ENCODE measurements at regions of chr19 and their contacts with region 1.

Region 1: GRCh38 chr19:35140962-35141637 is 2.0 kb upstream of the FXYD7 start:
- DNase-seq: peak; percentile 91 to 96 (median 94)
- ATAC-seq: peak; percentile 88
- H3K4me3 ChIP-seq: peak overlapping the region; percentile 16 to 43
- H3K4me3 Mint-ChIP-seq: peak overlapping the region; percentile 82
- H3K27ac ChIP-seq: no peak overlapping the region
- H3K27ac Mint-ChIP-seq: peak overlapping the region; percentile 85
- H3K4me1 ChIP-seq: peaks cover 43% of the 10 kb centered on the region
- H3K4me1 Mint-ChIP-seq: peaks cover 40% of the 10 kb centered on the region
- H3K27me3 ChIP-seq: peaks cover 0 to 2% of the 10 kb centered on the region in 2 experiments
- H3K27me3 Mint-ChIP-seq: no peaks in the 10 kb centered on the region
- CTCF ChIP-seq: peak; percentile 32

Region 2: GRCh38 chr19:35030257-35031071 is 110.6 kb before region 1 on chr19 and contains the start of gene SCN1B:
- CTCF ChIA-PET with region 1: no interaction called
- POLR2A ChIA-PET with region 1: no interaction called
- intact Hi-C with region 1: no loop called
- DNase-seq: peak in 8 of 9 experiments; percentile 38 to 77 (median 61)
- ATAC-seq: peak; percentile 79
- H3K4me3 ChIP-seq: peak within 1 kb of the TSS; percentile 18 to 50
- H3K4me3 Mint-ChIP-seq: peak within 1 kb of the TSS; percentile 76
- H3K27ac ChIP-seq: no peak within 1 kb of the TSS
- H3K27ac Mint-ChIP-seq: peak within 1 kb of the TSS; percentile 34
- H3K4me1 ChIP-seq: peaks cover 10% of the 10 kb centered on the region
- H3K4me1 Mint-ChIP-seq: peaks cover 15% of the 10 kb centered on the region
- H3K27me3 ChIP-seq: peaks cover 3 to 14% of the 10 kb centered on the region in 2 experiments
- H3K27me3 Mint-ChIP-seq: peaks cover 7% of the 10 kb centered on the region
- CTCF ChIP-seq: no peak
- total RNA-seq, gene SCN1B: 1.9 to 2.3 TPM

Region 3: DNA sequence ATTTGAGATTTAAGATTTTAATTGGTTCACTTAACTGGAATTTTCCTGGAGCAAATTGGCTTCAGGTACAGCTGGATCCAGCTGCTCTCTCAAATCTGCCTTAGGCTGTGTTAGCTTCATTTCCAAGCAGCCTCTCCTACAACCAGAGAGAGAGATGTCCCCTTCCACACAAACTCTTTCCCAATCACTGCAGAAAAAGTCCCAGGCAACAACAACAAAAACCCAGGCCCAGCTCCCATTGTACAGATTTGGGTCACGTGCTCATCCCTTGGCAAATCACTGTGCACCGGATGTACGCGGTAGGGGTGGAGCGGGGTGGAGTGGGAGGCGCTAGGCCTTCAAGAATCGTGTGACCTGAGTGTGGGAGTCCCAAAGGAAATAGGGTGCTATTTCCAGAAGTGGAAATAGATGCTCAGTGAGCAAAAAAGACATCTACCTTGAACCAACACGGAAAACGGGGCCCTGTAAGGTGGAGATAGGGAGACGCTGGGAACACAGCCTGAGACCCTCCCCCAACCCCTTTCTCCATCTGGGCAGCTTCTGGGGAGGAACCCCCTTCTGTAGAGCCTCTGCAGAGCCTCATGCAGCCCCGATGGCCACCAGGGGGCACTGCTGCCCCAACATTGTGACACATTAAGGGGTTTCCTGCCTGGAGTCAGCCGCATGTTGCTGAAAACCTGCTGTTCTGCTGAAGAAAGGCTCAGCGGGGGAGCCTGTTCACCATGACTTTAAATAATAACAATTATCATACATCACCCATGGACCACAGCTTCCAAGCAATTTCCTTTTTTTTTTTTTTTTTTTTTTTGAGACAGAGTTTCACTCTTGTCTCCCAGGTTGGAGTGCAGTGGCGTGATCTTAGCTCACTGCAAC is 74.2 kb before region 1 on chr19:
- CTCF ChIA-PET with region 1: interaction called, 25 read pairs
- POLR2A ChIA-PET with region 1: interaction called, 4 read pairs
- intact Hi-C with region 1: loop called (anchors 1 to 2 kb)
- DNase-seq: peak; percentile 79 to 96 (median 89)
- ATAC-seq: peak; percentile 93
- H3K4me3 ChIP-seq: no peak overlapping the region
- H3K4me3 Mint-ChIP-seq: no peak overlapping the region
- H3K27ac ChIP-seq: peak overlapping the region in 1 of 2 experiments; percentile 25
- H3K27ac Mint-ChIP-seq: no peak overlapping the region
- H3K4me1 ChIP-seq: peaks cover 4% of the 10 kb centered on the region
- H3K4me1 Mint-ChIP-seq: peaks cover 4% of the 10 kb centered on the region
- H3K27me3 ChIP-seq: no peaks in the 10 kb centered on the region
- H3K27me3 Mint-ChIP-seq: no peaks in the 10 kb centered on the region
- CTCF ChIP-seq: peak; percentile 76

Region 4: DNA sequence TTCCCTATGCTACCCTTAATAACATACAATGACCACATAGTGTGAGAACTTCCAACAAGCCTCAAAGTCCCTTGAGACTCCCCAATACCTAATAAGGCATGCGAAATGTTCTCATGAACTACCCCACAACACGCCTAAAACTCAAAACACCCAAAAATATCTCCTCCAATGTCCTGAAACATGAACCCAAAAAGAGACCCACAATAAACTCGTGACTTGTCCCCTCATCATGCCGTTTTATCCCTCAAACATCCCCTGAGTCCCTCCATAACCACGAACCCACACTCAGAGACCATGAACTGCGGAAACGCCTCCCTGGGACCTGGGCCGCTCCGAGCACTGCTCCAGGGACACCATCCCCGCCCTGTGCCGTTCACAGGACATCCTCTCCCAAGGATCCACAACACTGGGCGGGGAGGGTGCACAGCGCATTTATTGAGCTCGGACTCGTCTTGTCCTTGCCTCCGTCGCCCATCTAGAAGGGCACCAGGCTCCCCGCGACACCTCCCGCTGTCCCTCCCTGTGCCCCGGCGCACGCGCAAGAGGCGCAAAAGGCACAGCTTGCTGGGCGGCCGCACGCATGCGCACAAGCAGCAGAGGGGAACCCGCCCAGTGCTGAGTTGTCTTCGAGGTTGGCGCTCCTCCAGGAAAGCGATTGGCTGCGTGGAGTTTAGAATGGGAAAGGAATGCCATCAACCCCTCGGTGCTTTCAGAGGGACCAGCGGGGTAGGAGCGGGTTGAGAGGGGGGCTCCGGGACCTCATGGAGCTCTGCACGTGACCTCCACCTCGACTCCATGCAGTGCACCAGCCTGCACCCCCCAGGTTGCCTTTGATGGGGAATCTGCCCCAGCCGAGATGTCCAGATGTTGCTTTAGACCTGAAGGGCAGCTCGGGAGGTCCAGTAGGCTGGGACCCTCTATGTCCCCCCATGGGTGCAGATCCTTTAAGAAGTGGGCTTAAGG is 16.7 kb before region 1 on chr19:
- CTCF ChIA-PET with region 1: interaction called, 8 read pairs
- POLR2A ChIA-PET with region 1: no interaction called
- intact Hi-C with region 1: loop called (anchors 1 kb)
- DNase-seq: peak; percentile 67 to 92 (median 84)
- ATAC-seq: peak; percentile 97
- H3K4me3 ChIP-seq: peak overlapping the region; percentile 46 to 76
- H3K4me3 Mint-ChIP-seq: peak overlapping the region; percentile 80
- H3K27ac ChIP-seq: peak overlapping the region in 1 of 2 experiments; percentile 22
- H3K27ac Mint-ChIP-seq: peak overlapping the region; percentile 65
- H3K4me1 ChIP-seq: peaks cover 13% of the 10 kb centered on the region
- H3K4me1 Mint-ChIP-seq: peaks cover 13% of the 10 kb centered on the region
- H3K27me3 ChIP-seq: no peaks in the 10 kb centered on the region
- H3K27me3 Mint-ChIP-seq: no peaks in the 10 kb centered on the region
- CTCF ChIP-seq: no peak

Region 5: DNA sequence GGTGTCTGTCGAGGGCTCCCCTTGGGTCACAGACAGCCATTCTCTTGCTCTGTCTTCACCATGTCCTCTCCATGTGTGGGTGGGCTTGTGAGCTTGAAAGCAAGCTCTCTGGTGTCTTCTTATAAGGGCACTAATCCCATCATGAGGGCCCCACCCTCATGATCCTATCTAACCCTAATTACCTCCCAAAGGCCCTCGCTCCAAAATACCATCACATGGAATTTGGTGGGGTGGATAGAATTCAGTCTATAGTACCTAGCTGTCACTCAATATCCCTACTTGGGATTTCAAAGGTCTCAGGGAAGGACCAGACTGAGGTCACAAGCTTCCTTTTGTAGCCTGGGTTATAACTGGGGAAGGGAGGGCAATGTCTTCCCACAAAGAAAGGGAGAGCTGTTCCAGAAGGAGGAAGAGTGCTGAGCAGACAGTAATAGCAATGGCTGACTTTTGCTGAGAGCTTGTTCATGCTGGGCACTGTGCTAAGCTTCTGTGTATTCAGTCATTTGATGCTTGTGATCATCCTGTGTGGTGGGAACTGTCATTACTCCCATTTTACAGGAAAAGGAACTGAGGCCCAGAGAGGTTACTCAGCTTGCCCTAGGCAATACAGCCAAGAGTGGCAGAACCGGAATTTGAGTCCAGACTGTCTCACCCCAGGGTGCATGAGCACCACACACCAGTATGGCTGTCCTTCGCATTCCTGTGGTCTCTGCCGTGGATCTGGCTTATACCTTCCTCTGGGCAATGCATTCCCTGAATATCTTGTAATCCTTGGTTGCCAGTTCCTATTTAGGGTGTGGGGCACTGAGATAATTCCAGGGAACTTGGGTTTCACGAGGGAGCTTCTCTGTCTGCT is 21.6 kb after region 1 on chr19:
- CTCF ChIA-PET with region 1: interaction called, 10 read pairs
- POLR2A ChIA-PET with region 1: no interaction called
- intact Hi-C with region 1: no loop called
- DNase-seq: no peak
- ATAC-seq: no peak
- H3K4me3 ChIP-seq: no peak overlapping the region
- H3K4me3 Mint-ChIP-seq: no peak overlapping the region
- H3K27ac ChIP-seq: peak overlapping the region in 1 of 2 experiments; percentile 15
- H3K27ac Mint-ChIP-seq: peak overlapping the region; percentile 75
- H3K4me1 ChIP-seq: peaks cover 19% of the 10 kb centered on the region
- H3K4me1 Mint-ChIP-seq: peaks cover 36% of the 10 kb centered on the region
- H3K27me3 ChIP-seq: no peaks in the 10 kb centered on the region
- H3K27me3 Mint-ChIP-seq: no peaks in the 10 kb centered on the region
- CTCF ChIP-seq: no peak

Region 6: GRCh38 chr19:35247526-35248306 is 106.6 kb after region 1 on chr19:
- CTCF ChIA-PET with region 1: interaction called, 4 read pairs
- POLR2A ChIA-PET with region 1: no interaction called
- intact Hi-C with region 1: loop called (anchors 1 kb)
- DNase-seq: peak in 8 of 9 experiments; percentile 41 to 82 (median 65)
- ATAC-seq: peak; percentile 33
- H3K4me3 ChIP-seq: peak overlapping the region; percentile 65 to 96
- H3K4me3 Mint-ChIP-seq: peak overlapping the region; percentile 97
- H3K27ac ChIP-seq: peak overlapping the region; percentile 83 to 84
- H3K27ac Mint-ChIP-seq: peak overlapping the region; percentile 98
- H3K4me1 ChIP-seq: peaks cover 19% of the 10 kb centered on the region
- H3K4me1 Mint-ChIP-seq: peaks cover 39% of the 10 kb centered on the region
- H3K27me3 ChIP-seq: peaks cover 0 to 9% of the 10 kb centered on the region in 2 experiments
- H3K27me3 Mint-ChIP-seq: no peaks in the 10 kb centered on the region
- CTCF ChIP-seq: peak; percentile 43

Region 7: DNA sequence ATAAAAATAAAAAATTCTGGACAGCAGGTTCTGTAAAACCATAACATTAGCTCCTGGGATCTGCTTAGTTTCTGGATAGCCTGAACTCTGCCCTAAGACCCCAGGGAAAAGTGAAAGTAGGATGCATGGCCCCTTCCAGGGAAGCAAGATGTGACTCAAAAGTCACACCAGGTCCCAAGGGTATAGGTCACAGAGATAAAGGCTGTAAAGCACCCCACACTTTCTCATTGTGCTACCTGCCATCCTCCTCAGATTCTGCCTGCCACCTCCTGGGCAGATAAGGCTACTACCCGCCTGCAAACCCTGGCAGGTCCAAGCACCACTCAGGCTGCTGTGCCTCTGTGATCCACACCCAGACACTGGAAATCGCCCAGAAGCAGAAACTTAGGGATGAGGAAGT is 327.5 kb after region 1 on chr19:
- CTCF ChIA-PET with region 1: interaction called, 3 read pairs
- POLR2A ChIA-PET with region 1: no interaction called
- intact Hi-C with region 1: loop called in 1 of 2 experiments (anchors 5 kb)
- DNase-seq: peak; percentile 40 to 83 (median 68)
- ATAC-seq: peak; percentile 100
- H3K4me3 ChIP-seq: no peak overlapping the region
- H3K4me3 Mint-ChIP-seq: no peak overlapping the region
- H3K27ac ChIP-seq: no peak overlapping the region
- H3K27ac Mint-ChIP-seq: no peak overlapping the region
- H3K4me1 ChIP-seq: peaks cover 3% of the 10 kb centered on the region
- H3K4me1 Mint-ChIP-seq: peaks cover 8% of the 10 kb centered on the region
- H3K27me3 ChIP-seq: no peaks in the 10 kb centered on the region
- H3K27me3 Mint-ChIP-seq: no peaks in the 10 kb centered on the region
- CTCF ChIP-seq: peak; percentile 68